HAP-1 (cell line): ENCODE measurements at regions of chr12 and their contacts with region 1.

Region 1: DNA sequence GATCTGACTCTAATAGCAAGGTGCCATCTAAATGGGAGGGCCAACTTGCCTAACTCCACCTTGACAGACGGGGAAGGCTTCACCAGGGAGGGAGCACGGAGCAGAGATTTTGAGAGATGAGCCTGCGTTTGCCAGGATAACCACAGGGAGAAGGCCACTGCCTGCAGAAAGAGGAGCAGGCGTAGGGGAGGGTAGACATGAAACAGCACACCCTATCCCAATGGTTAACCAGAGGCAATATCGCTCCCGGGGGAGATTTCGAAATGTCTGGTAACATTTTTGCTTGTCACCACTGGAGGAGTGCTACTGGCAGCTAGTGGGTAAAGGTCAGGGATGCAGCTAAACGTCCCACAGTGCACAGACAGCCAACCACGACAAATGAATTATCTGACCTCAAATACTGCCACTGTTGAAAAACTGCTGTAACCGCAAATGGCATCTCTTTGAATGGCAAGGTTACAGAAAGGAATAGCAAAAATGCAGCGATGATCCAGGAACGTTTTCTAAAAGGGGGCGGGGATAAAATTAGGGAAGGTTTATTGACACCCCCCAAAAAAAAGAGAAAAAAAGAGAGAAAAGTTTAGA is 126.0 kb upstream of the ATF7IP start:
- DNase-seq: peak in 1 of 2 experiments; percentile 43
- H3K4me3 ChIP-seq: no peak overlapping the region
- H3K4me1 ChIP-seq: peaks cover 8% of the 10 kb centered on the region; the same call in 1 of the 2 replicates
- H3K27me3 ChIP-seq: no peaks in the 10 kb centered on the region

Region 2: GRCh38 chr12:14629832-14630710 is 390.6 kb after region 1 on chr12:
- in situ Hi-C with region 1: loop called (anchors 25 kb)
- DNase-seq: peak; percentile 46 to 73
- H3K4me3 ChIP-seq: no peak overlapping the region
- H3K4me1 ChIP-seq: no peaks in the 10 kb centered on the region
- H3K27me3 ChIP-seq: no peaks in the 10 kb centered on the region